Activated CD8-positive, alpha-beta T cell treated with anti-CD3 and anti-CD28 coated beads for 36 hours (primary cell): ENCODE measurements at regions of chr21 and their contacts with region 1.

Region 1: DNA sequence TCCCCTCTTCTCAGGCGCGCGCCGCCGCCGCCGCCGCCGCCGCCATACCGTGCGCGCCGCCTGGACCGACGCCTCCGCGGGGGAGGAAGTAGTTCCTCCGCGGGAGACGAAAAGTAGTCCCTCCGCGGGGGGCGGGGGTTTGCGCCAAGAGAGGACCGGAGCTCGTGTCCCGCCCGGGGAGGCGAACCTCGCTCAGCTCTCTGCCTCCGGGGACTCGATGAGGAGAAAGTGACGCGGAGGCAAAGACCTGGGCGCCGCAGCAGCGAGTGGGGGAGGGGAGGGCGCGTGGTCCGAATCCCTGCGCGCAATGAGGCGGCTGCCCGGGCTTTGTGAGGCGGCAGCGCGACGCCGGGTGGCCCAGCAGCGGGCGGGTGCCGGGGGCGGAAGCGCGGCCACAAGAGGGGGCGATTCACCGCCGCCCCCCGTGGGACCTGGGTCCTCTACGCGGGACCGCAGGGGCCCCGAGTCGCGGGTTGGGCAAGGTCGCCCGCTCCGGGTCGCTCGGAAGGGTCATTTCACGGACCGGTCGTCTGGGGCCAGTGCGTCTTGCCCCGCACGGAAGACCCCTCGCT is at the start of gene BRWD1:
- DNase-seq: peak; percentile 81
- ATAC-seq: peak; percentile 52
- H3K4me3 Mint-ChIP-seq: peak within 1 kb of the TSS; percentile 93
- H3K27ac Mint-ChIP-seq: peak within 1 kb of the TSS; percentile 95
- H3K4me1 Mint-ChIP-seq: peaks cover 38% of the 10 kb centered on the region
- H3K27me3 Mint-ChIP-seq: no peaks in the 10 kb centered on the region
- CTCF ChIP-seq: no peak
- total RNA-seq, gene BRWD1: 27.9 to 29.3 TPM

Region 2: GRCh38 chr21:39183237-39184007 is 130.2 kb before region 1 on chr21 and contains the start of gene PSMG1:
- CTCF ChIA-PET with region 1: interaction called, 3 read pairs
- POLR2A ChIA-PET with region 1: interaction called, 16 read pairs
- intact Hi-C with region 1: no loop called
- DNase-seq: peak; percentile 95
- ATAC-seq: peak; percentile 91
- H3K4me3 Mint-ChIP-seq: peak within 1 kb of the TSS; percentile 87
- H3K27ac Mint-ChIP-seq: peak within 1 kb of the TSS; percentile 95
- H3K4me1 Mint-ChIP-seq: peaks cover 52% of the 10 kb centered on the region
- H3K27me3 Mint-ChIP-seq: no peaks in the 10 kb centered on the region
- CTCF ChIP-seq: no peak
- total RNA-seq, gene PSMG1: 90.9 to 107 TPM

Region 3: DNA sequence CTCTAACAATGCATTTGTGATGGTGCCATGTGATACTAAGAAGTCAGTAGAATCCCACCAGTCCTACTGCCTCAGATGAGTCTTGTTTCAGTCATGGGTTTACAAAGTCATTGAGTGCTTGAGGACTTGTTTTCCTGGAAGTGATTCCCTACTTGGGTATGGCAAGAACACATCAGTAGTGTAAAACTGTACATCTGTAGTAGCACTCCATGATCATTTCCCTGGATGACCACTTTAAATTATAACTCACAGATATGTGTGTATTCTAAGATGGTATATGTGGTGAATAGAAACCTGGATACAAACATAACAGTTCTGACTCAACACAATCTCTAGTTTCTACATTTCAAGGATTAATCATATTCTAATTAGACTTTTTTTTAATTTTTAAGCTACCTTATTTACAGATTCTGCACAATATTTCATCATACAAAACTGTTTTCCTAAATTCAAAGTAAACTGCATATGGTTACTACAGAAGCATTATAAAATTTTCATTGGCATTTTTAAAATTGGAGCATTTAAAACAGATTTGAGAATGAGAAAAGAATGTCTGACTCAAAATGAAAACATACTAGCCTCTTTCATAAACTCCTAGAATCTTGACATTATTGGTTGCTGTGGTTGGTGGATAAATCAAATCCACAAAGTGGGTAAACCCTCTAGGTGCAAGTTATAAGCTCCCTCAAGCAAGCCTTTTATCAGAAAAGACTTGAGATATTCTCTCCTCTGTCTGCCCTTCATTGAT is 123.6 kb before region 1 on chr21:
- CTCF ChIA-PET with region 1: no interaction called
- POLR2A ChIA-PET with region 1: interaction called, 11 read pairs
- intact Hi-C with region 1: no loop called
- DNase-seq: no peak
- ATAC-seq: peak; percentile 70
- H3K4me3 Mint-ChIP-seq: no peak overlapping the region
- H3K27ac Mint-ChIP-seq: peak overlapping the region; percentile 23
- H3K4me1 Mint-ChIP-seq: peaks cover 51% of the 10 kb centered on the region
- H3K27me3 Mint-ChIP-seq: no peaks in the 10 kb centered on the region
- CTCF ChIP-seq: no peak

Region 4: DNA sequence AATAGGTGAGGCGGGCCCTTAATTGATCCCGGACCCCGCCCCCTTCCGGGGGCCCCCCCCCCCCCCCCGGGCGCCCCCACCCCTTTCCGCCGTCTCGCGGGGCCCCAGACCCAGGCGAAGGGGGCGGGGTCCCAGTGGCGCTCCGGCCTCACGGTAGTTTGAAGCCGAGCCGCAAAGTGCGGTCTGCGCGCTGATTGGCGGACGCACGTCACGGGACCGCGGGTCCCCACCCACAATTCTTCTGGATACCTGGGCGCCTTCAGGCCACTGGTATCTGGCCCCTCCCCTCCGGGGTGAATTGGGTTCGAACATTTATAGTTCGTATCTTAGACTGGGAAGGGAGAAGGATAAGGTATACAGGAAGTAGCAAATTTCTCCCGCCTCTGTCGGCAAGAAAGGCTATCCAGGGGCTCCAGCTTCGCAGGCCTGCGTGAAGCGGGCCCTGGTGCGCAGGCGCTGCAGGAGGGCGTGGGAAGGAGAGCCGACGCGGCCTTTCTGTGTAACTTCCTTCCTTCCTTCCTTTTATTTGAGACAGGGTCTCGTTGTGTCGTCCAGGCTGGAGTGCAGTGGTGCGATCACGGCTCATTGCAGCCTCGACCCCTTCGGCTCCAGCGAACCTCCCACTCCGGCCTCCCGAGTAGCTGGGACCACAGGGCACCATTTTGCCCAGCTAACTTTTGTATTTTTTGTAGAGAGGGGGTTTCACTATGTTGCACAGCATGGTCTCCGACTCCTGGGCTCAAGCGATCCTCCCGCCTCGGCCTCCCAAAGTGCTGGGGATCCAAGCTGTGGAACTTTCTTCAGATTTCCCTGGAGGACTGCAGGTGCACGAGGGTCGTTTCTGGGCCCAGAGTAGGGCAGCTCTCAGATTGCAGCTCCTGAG is 35.8 kb after region 1 on chr21:
- CTCF ChIA-PET with region 1: interaction called, 5 read pairs
- POLR2A ChIA-PET with region 1: interaction called, 111 read pairs
- intact Hi-C with region 1: loop called (anchors 2 kb)
- DNase-seq: peak; percentile 98
- ATAC-seq: peak; percentile 87
- H3K4me3 Mint-ChIP-seq: peak overlapping the region; percentile 92
- H3K27ac Mint-ChIP-seq: peak overlapping the region; percentile 100
- H3K4me1 Mint-ChIP-seq: peaks cover 32% of the 10 kb centered on the region
- H3K27me3 Mint-ChIP-seq: no peaks in the 10 kb centered on the region
- CTCF ChIP-seq: no peak

Region 5: GRCh38 chr21:39388038-39388810 is 74.6 kb after region 1 on chr21:
- CTCF ChIA-PET with region 1: interaction called, 5 read pairs
- POLR2A ChIA-PET with region 1: interaction called, 31 read pairs
- intact Hi-C with region 1: loop called (anchors 5 kb)
- DNase-seq: peak; percentile 93
- ATAC-seq: peak; percentile 75
- H3K4me3 Mint-ChIP-seq: peak overlapping the region; percentile 77
- H3K27ac Mint-ChIP-seq: peak overlapping the region; percentile 92
- H3K4me1 Mint-ChIP-seq: peaks cover 34% of the 10 kb centered on the region
- H3K27me3 Mint-ChIP-seq: no peaks in the 10 kb centered on the region
- CTCF ChIP-seq: peak; percentile 98